Activated naive CD4-positive, alpha-beta T cell treated with anti-CD3 and anti-CD28 coated beads for 36 hours (primary cell): ENCODE measurements at regions of chr13 and their contacts with region 1.

Region 1: DNA sequence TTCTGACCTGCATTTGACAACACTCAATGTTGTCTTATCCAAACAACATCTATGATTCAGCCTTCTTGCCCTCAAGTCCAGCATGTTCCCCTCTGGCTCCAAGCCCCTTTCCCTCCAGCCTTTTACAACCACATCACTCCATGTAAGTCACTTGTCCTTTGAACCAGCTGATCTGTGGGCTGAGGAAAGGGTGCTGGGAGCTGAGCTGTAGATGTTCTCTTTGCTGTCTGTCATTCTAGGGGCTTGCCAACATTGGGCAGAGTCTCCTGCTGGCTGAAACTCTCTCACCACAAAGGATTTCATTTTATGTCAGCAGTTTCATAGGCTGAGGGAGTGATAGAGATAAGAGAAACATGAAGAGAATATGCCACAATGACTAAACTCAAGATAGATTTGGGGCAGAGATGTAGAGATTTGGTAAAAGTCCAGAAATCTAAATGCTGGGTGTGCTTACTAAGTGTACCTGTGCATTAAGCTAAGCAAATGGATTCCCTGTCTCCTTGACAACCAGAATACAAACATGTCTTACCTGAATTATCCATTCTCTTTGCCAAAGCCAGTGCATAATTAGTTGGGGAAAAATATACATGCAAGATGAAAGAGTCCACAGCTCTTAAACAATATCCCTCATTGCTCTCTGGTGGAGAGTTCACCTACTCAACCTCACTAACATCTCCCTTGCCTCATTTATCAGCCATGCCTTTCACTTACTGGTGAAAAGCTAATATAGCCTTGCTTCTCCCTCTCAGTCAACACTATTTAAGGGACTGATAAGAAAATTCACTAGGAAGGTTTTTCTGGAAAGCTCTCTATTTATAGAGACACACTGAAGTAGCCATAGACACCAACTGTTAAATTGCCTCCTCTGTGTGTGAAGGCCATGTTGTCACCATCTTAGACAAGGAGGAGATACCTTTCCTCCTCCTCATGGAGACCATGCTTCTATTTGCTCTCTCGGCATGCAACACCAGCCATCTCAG is 175.5 kb upstream of the SERP2 start:
- DNase-seq: peak; percentile 65
- H3K4me3 Mint-ChIP-seq: no peak overlapping the region
- H3K27ac Mint-ChIP-seq: no peak overlapping the region
- H3K4me1 Mint-ChIP-seq: peaks cover 36% of the 10 kb centered on the region
- H3K27me3 Mint-ChIP-seq: peaks cover 6% of the 10 kb centered on the region

Region 2: GRCh38 chr13:43596924-43597598 is 601.0 kb before region 1 on chr13:
- CTCF ChIA-PET with region 1: no interaction called
- intact Hi-C with region 1: no loop called
- DNase-seq: peak; percentile 6
- H3K4me3 Mint-ChIP-seq: no peak overlapping the region
- H3K27ac Mint-ChIP-seq: no peak overlapping the region
- H3K4me1 Mint-ChIP-seq: peaks cover 17% of the 10 kb centered on the region
- H3K27me3 Mint-ChIP-seq: peaks cover 3% of the 10 kb centered on the region

Region 3: DNA sequence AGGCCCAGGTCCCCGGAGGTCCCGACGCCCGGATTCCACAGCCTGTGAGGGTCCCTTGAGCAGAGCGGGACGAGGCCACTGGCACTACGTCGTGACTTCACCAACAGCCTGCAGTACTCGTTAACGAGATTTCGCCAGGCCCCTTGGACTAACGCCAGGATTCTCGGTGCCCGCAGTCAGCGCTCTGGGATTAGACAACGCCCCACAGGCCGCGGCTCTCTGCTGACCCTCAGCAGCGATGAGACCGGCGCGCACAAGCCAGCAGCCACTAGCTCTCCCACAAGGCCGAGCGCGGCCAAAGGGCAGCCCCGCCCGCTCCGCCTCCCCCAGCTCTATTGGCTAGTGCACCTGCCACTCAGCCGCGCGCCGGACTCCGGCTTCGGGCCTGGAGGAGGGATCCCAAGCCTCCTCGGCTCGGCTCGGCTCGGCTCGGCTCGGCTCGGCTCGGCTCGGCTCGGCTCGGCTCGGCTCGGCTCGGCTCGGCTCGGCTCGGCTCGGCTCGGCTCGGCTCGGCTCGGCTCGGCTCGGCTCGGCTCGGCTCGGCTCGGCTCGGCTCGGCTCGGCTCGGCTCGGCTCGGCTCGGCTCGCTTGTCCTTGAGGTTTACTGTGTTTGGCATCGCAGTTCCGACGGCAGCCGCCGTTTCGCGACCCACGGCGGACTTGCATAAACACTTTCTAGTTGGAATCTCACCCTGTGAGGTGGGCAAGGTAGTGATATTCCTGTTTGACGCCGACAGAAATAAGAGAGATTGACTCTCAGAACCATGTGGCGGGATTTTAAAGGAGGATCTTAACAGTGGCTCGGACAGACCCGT is 56.1 kb before region 1 on chr13:
- CTCF ChIA-PET with region 1: no interaction called
- intact Hi-C with region 1: loop called (anchors 2 kb)
- DNase-seq: peak; percentile 95
- H3K4me3 Mint-ChIP-seq: peak overlapping the region; percentile 89
- H3K27ac Mint-ChIP-seq: peak overlapping the region; percentile 86
- H3K4me1 Mint-ChIP-seq: peaks cover 14% of the 10 kb centered on the region
- H3K27me3 Mint-ChIP-seq: no peaks in the 10 kb centered on the region

Region 4: DNA sequence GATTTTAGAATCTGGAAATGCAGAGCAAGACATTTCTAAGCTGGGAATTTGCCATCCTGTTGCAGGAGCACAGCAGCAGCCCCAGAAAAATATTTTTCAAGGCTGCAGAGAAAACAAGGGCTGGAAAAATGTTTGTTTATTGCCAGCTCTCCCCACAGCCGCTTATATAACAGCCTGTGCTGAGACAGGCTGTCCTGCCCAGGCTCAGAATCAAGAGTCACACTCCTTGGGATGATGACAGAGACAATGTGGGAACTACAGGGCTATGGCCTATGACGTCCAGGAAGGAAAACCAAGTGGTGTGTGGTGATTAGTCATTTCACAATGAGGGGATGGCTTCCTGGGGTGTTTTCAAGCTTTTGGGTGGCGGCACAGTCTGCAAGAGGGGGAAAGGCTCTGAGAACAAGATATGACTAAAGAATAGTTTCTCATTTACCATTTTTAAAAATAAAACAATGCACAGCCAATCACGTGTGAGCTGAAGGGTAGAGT is 39.2 kb after region 1 on chr13:
- CTCF ChIA-PET with region 1: no interaction called
- intact Hi-C with region 1: loop called (anchors 2 kb)
- DNase-seq: peak; percentile 49
- H3K4me3 Mint-ChIP-seq: no peak overlapping the region
- H3K27ac Mint-ChIP-seq: no peak overlapping the region
- H3K4me1 Mint-ChIP-seq: peaks cover 5% of the 10 kb centered on the region
- H3K27me3 Mint-ChIP-seq: peaks cover 8% of the 10 kb centered on the region